Activated CD4-positive, alpha-beta T cell treated with anti-CD3 and anti-CD28 coated beads, Interleukin-2, amount 10 ng/mL, durations not matched to agents 7 days and 5 days (primary cell): ENCODE measurements at regions of chr1 and their contacts with region 1.

Region 1: GRCh38 chr1:113984710-113985109 is 5.4 kb downstream of the OLFML3 start:
- DNase-seq: no peak
- H3K4me3 Mint-ChIP-seq: no peak overlapping the region
- H3K27ac Mint-ChIP-seq: no peak overlapping the region
- H3K4me1 Mint-ChIP-seq: no peaks in the 10 kb centered on the region
- H3K27me3 Mint-ChIP-seq: no peaks in the 10 kb centered on the region

Region 2: DNA sequence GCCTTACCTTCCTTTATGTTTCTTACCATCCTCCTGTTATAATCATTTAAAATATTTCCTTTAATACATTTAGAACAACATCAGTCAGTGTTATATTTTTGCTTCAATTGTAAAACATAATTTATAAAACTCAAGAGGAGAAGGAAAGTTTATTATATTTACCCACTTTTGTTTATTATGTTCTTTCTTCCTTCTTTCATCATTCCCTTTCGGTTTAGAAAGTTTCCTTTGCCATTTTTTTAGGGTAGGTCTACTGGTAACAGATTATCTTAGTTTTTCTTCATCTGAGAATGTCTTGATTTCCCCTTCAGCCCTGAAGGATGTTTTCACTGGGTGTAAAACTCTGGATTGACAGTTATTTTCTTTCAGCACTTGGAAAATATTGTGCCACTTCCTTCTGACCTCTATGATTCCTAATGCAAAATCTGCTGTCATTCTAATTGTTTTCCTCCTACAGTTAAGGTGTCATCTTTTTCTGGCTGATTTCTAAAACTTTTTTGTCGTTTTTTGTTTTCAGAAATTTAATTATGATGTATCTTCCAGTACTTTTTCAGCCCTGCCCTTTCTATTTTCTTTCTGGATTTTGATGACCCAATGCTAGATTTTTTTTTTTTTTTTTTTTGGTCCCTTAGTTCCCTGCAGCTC is 138.2 kb before region 1 on chr1:
- CTCF ChIA-PET with region 1: no interaction called
- POLR2A ChIA-PET with region 1: interaction called, 12 read pairs
- DNase-seq: no peak
- H3K4me3 Mint-ChIP-seq: no peak overlapping the region
- H3K27ac Mint-ChIP-seq: no peak overlapping the region
- H3K4me1 Mint-ChIP-seq: peaks cover 13% of the 10 kb centered on the region
- H3K27me3 Mint-ChIP-seq: no peaks in the 10 kb centered on the region